ENCODE measurements at regions of chr10 and their contacts with region 1.

Region 1: GRCh38 chr10:102596506-102596971 is 47.7 kb upstream of the TRIM8 start:
- DNase-seq: peak; percentile 33
- H3K4me3 Mint-ChIP-seq: no peak overlapping the region
- H3K27ac Mint-ChIP-seq: no peak overlapping the region
- H3K4me1 Mint-ChIP-seq: no peaks in the 10 kb centered on the region
- H3K27me3 Mint-ChIP-seq: no peaks in the 10 kb centered on the region

Region 2: GRCh38 chr10:102523250-102524029 is 73.1 kb before region 1 on chr10:
- CTCF ChIA-PET with region 1: no interaction called
- POLR2A ChIA-PET with region 1: no interaction called
- DNase-seq: no peak
- H3K4me3 Mint-ChIP-seq: no peak overlapping the region
- H3K27ac Mint-ChIP-seq: peak overlapping the region; percentile 6
- H3K4me1 Mint-ChIP-seq: peaks cover 7% of the 10 kb centered on the region
- H3K27me3 Mint-ChIP-seq: no peaks in the 10 kb centered on the region

Region 3: DNA sequence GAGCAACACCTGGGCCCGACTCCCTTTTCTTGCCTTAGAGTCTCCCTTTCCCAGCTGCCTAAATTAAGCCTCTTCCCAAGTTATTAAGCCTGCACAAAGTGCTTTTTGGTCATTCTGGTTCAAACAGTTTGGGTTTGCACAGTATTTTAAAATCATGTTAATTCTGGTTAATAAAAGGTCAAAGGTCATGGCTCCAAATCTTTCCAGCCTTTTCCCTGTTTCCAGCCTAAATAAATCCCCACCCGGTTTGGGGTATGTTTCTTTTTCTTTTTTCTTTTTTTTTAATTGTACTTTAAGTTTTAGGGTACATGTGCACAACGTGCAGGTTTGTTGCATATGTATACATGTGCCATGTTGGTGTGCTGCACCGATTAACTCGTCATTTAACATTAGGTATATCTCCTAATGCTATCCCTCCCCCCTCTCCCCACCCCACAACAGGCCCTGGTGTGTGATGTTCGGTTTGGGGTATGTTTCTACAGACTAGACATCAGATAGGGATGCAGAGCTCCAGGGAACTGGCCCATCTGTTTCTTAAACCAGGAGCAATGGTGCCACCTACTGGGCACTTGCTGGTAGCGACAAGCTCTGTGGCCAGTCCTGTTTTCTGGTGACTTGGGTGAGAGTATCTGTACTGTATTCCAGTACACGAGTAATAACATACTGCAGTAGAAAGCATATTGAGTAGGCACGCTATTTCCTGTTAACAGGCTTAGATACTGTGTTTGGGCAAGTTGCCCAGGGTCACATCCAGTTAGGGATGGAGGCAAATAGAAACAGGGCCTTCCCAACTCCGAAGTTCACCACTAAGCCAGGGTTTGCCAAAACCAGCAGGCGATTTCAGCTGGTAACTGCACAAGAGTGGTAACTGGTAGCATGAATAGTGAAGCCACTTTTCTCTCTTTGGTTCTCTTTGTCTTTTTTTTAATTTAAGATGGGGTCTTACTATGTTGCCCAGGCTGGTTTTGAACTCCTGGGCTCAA is 12.8 kb before region 1 on chr10:
- CTCF ChIA-PET with region 1: interaction called, 10 read pairs
- POLR2A ChIA-PET with region 1: no interaction called
- DNase-seq: peak; percentile 89
- H3K4me3 Mint-ChIP-seq: no peak overlapping the region
- H3K27ac Mint-ChIP-seq: no peak overlapping the region
- H3K4me1 Mint-ChIP-seq: peaks cover 14% of the 10 kb centered on the region
- H3K27me3 Mint-ChIP-seq: no peaks in the 10 kb centered on the region